ENCODE measurements at regions of chr17 and their contacts with region 1.

Region 1: DNA sequence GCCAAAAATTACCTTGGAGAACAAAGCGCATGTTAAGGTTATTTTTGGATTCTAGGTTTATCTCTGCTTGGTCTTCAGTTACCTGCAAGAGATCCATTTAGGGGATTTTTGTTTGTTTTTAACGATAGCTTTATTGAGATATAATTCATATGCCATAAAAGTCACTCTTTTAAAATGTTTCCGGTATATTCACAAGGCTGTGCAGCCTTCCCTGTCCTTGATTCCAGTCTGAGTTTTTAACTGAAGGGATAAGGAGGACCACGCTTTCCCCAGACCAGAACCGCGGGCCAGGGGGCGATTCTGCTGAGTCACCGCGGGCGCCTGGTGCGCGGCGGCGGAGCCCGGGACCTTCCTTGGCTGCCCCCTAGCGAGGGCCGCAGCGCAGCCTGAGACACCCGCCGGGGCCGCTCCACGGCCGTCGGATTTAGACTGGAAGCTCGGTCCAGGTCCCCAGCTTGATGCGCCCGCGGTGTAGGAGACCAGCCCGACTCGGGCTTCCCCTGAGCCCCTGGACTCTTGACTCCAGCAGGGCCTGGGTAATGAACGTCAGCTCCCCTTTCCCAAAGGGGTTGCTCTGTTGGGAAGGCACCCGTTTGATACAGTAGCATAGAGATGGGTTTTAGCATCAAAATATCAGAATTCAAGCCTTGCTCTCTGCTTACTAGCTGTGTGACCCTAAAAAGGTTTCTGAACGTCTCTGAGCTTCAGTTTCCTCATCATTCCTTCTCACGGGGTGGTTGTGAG is 50.0 kb upstream of the STH start:
- DNase-seq: peak; percentile 81 to 94
- ATAC-seq: peak; percentile 91 to 99
- H3K4me3 ChIP-seq: 0 out of 3 replicates have a peak overlapping the region, but pooled peaks have one; percentile 7
- H3K27ac ChIP-seq: peak overlapping the region; percentile 88 to 90
- H3K4me1 ChIP-seq: peaks cover 9% of the 10 kb centered on the region
- CTCF ChIP-seq: peak; percentile 90
- EP300 ChIP-seq: no peak
- POLR2A ChIP-seq: 0 out of 2 replicates have a peak, but pooled peaks have one; percentile 6
- RAD21 ChIP-seq: peak; percentile 57 to 76

Region 2: DNA sequence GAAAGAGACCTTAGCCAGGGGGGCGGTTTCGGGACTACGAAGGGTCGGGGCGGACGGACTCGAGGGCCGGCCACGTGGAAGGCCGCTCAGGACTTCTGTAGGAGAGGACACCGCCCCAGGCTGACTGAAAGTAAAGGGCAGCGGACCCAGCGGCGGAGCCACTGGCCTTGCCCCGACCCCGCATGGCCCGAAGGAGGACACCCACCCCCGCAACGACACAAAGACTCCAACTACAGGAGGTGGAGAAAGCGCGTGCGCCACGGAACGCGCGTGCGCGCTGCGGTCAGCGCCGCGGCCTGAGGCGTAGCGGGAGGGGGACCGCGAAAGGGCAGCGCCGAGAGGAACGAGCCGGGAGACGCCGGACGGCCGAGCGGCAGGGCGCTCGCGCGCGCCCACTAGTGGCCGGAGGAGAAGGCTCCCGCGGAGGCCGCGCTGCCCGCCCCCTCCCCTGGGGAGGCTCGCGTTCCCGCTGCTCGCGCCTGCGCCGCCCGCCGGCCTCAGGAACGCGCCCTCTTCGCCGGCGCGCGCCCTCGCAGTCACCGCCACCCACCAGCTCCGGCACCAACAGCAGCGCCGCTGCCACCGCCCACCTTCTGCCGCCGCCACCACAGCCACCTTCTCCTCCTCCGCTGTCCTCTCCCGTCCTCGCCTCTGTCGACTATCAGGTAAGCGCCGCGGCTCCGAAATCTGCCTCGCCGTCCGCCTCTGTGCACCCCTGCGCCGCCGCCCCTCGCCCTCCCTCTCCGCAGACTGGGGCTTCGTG is 54.9 kb before region 1 on chr17 and contains the start of gene MAPT:
- CTCF ChIA-PET with region 1: interaction called, 26 read pairs
- POLR2A ChIA-PET with region 1: interaction called, 4 read pairs
- DNase-seq: peak; percentile 93 to 97
- ATAC-seq: peak; percentile 75 to 93
- H3K4me3 ChIP-seq: peak within 1 kb of the TSS; percentile 69
- H3K27ac ChIP-seq: peak within 1 kb of the TSS; percentile 76 to 85
- H3K4me1 ChIP-seq: peaks cover 22% of the 10 kb centered on the region
- CTCF ChIP-seq: peak; percentile 99
- EP300 ChIP-seq: no peak
- POLR2A ChIP-seq: peak; percentile 92
- RAD21 ChIP-seq: peak; percentile 15 to 54; a peak in 4 of 5 replicates
- polyA plus RNA-seq, gene MAPT: 1.1 and 1.2 TPM in 2 replicates

Region 3: GRCh38 chr17:45900723-45901430 is 48.2 kb before region 1 on chr17:
- CTCF ChIA-PET with region 1: interaction called, 10 read pairs
- POLR2A ChIA-PET with region 1: interaction called, 3 read pairs
- DNase-seq: no peak
- ATAC-seq: no peak
- H3K4me3 ChIP-seq: no peak overlapping the region
- H3K27ac ChIP-seq: no peak overlapping the region
- H3K4me1 ChIP-seq: peaks cover 20% of the 10 kb centered on the region
- CTCF ChIP-seq: no peak
- EP300 ChIP-seq: no peak
- POLR2A ChIP-seq: no peak
- RAD21 ChIP-seq: no peak

Region 4: GRCh38 chr17:45914047-45914717 is 34.9 kb before region 1 on chr17:
- CTCF ChIA-PET with region 1: interaction called, 10 read pairs
- POLR2A ChIA-PET with region 1: no interaction called
- DNase-seq: no peak
- ATAC-seq: peak; percentile 53 to 59; a peak in 2 of 6 replicates
- H3K4me3 ChIP-seq: no peak overlapping the region
- H3K27ac ChIP-seq: no peak overlapping the region
- H3K4me1 ChIP-seq: no peaks in the 10 kb centered on the region
- CTCF ChIP-seq: no peak
- EP300 ChIP-seq: no peak
- POLR2A ChIP-seq: no peak
- RAD21 ChIP-seq: no peak

Region 5: DNA sequence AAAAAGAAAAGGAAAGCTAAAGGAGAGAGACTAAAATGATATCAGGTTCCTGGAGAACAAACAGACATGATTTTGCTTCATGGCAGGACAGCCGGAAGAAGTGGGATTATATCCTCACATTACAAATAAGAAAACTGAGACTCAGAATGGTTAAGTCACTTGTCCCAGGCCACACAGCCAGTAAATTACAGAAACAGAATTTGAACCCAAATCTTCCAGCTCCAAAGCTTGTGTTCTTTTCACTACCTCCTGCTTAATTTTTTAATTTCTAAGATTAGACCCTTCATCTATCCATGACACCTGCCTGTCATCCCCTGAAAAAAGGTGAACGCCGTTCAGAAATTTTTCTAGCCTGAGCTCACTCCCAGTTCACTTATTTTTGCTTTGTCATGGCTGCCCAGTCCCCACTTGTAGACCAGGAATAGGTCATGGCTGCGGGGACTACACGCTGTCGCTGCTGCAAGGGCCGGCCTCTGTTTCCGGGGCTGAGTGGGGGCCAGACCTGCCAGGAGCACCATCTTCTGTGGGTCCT is 18.6 kb before region 1 on chr17:
- CTCF ChIA-PET with region 1: interaction called, 89 read pairs
- POLR2A ChIA-PET with region 1: no interaction called
- DNase-seq: no peak
- ATAC-seq: no peak
- H3K4me3 ChIP-seq: no peak overlapping the region
- H3K27ac ChIP-seq: 0 out of 6 replicates have a peak overlapping the region, but pooled peaks of 1 of the 2 experiments have one; percentile 1
- H3K4me1 ChIP-seq: peaks cover 15% of the 10 kb centered on the region; the same call in 2 of the 3 replicates
- CTCF ChIP-seq: no peak
- EP300 ChIP-seq: no peak
- POLR2A ChIP-seq: no peak
- RAD21 ChIP-seq: no peak

Region 6: GRCh38 chr17:45963889-45964288 is 14.8 kb after region 1 on chr17:
- CTCF ChIA-PET with region 1: interaction called, 24 read pairs
- POLR2A ChIA-PET with region 1: no interaction called
- DNase-seq: no peak
- ATAC-seq: no peak
- H3K4me3 ChIP-seq: no peak overlapping the region
- H3K27ac ChIP-seq: no peak overlapping the region
- H3K4me1 ChIP-seq: no peaks in the 10 kb centered on the region
- CTCF ChIP-seq: no peak
- EP300 ChIP-seq: no peak
- POLR2A ChIP-seq: no peak
- RAD21 ChIP-seq: no peak

Region 7: GRCh38 chr17:45976755-45977505 is 27.9 kb after region 1 on chr17:
- CTCF ChIA-PET with region 1: interaction called, 27 read pairs
- POLR2A ChIA-PET with region 1: no interaction called
- DNase-seq: no peak
- ATAC-seq: no peak; a peak in 1 of 6 replicates
- H3K4me3 ChIP-seq: no peak overlapping the region
- H3K27ac ChIP-seq: no peak overlapping the region
- H3K4me1 ChIP-seq: no peaks in the 10 kb centered on the region
- CTCF ChIP-seq: no peak
- EP300 ChIP-seq: no peak
- POLR2A ChIP-seq: no peak
- RAD21 ChIP-seq: no peak